SK-N-SH (cell line): ENCODE measurements at regions of chr7 and their contacts with region 1.

Region 1: DNA sequence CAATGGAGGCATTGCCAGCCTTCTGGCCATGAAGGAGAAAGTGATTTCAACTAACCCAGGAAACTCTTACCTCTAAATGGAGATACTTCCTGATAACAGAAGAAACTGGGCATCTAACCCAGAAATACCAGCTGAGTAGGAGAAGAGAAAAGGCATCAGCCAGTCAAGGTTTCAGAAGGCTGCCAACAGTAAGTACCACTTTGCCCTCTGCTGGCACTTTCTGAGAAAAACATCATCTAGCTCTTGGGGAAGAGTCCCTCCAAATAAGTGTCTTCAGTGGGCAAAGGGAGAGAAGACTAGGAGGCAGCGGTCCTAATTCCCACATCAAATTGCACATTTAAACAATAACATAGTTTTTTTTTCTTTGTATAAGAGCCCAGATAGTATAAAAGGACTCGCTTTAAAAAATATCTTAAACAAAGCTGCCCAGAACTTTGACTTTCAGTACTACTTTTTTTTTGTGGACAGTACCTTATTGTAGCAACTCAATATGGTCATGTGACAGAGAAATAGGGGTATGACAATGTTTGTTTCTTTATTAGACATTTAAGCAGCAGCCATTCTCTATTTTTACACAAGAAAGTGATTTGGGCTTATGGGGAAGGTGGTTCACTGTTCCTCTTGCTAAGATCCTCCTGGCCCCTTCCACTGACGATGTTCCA is 157.3 kb downstream of the CTTNBP2 start:
- DNase-seq: peak; percentile 59
- H3K4me3 ChIP-seq: no peak overlapping the region
- H3K27ac ChIP-seq: no peak overlapping the region
- H3K4me1 ChIP-seq: no peaks in the 10 kb centered on the region
- H3K27me3 ChIP-seq: peaks cover 29% of the 10 kb centered on the region; the same call in 1 of the 2 replicates
- CTCF ChIP-seq: peak; percentile 71
- EP300 ChIP-seq: no peak
- RAD21 ChIP-seq: peak; percentile 71

Region 2: DNA sequence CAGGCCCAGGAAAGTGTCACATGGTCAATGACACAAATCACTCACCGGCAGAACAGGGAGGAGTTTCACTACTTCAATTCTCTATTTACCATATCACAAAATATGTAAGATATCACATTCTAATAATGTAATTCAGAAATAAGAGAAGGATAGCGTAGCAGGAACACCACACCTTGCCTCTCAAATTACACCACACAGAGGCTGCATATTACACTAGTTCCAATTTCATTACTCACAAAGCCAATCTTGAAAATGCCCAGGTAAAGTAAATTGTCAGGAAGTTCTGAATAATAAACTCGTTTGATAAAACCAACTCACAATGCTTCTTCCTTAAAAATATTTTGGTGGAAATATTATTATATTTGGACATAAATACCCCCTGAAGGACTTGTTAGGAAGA is 11.8 kb before region 1 on chr7:
- CTCF ChIA-PET with region 1: interaction called, 10 read pairs
- POLR2A ChIA-PET with region 1: no interaction called
- DNase-seq: no peak
- H3K4me3 ChIP-seq: no peak overlapping the region
- H3K27ac ChIP-seq: no peak overlapping the region
- H3K4me1 ChIP-seq: no peaks in the 10 kb centered on the region
- H3K27me3 ChIP-seq: no peaks in the 10 kb centered on the region
- CTCF ChIP-seq: no peak
- EP300 ChIP-seq: no peak
- RAD21 ChIP-seq: no peak

Region 3: DNA sequence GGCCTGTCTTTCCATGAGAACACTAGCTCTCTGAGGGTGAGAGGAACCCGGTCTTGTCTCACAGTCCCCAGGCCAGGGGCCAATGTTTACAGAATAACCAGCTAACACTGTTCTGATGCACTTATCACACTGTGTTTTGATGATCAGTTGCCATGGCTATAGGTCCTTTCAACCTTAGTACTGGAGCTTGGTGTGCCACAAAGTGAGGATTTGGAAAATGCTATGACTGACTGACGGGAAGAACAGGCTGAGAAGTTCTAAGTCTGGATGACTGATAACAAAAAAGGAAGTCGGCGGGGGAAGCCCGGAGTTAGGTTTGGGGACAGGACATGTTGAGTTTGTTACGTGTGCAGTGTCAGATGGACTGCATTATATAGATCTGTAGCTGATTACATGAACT is 15.5 kb after region 1 on chr7:
- CTCF ChIA-PET with region 1: interaction called, 11 read pairs
- POLR2A ChIA-PET with region 1: no interaction called
- DNase-seq: no peak
- H3K4me3 ChIP-seq: no peak overlapping the region
- H3K27ac ChIP-seq: no peak overlapping the region
- H3K4me1 ChIP-seq: peaks cover 0 to 4% of the 10 kb centered on the region in 2 experiments; a peak in 1 of 4 replicates
- H3K27me3 ChIP-seq: peaks cover 44% of the 10 kb centered on the region; the same call in 1 of the 2 replicates
- CTCF ChIP-seq: no peak
- EP300 ChIP-seq: no peak
- RAD21 ChIP-seq: no peak